ENCODE measurements at regions of chr17 and their contacts with region 1.

Region 1: DNA sequence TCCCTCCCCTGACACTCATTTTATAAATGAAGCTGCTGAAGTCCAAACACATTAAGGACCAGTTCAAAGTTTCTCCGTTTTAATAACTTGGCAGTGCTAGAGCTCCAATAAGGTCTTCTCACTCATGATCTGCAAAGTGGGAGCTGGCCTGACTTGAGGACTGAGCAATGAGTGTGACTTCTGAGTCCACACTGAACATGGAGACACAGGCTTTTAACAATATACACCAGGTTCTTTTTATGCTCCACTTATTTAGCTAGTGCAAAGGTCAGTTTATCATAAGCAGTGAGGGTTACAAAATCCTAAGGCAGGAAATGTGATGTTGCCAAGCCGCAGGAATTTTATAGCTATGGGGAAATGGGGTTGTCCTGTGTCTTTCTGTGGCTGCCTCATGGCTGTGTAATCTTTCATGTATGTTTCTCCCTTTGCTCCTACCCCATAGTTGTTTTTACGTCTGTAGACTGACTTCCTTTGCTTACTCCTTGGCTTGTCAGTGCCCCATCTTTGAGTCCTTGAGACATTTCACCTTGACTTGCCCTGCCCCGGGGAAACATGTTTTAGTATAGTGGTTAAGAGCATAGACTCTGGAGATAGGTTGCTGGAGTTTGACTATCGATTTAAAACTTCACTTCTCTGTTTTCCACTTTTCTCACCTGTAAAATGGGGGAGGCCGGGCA is 12.1 kb upstream of the MMD start:
- DNase-seq: peak; percentile 80 to 91
- ATAC-seq: peak; percentile 76 to 85
- H3K4me3 ChIP-seq: peak overlapping the region; percentile 6; the same call in 1 of the 3 replicates
- H3K27ac ChIP-seq: peak overlapping the region; percentile 84 to 86
- H3K4me1 ChIP-seq: peaks cover 55% of the 10 kb centered on the region
- CTCF ChIP-seq: no peak
- EP300 ChIP-seq: peak; percentile 79 to 91; a peak in 4 of 5 replicates
- POLR2A ChIP-seq: no peak
- RAD21 ChIP-seq: peak in 1 of 2 experiments; percentile 38; a peak in 2 of 5 replicates

Region 2: GRCh38 chr17:55177159-55177854 is 256.5 kb before region 1 on chr17:
- CTCF ChIA-PET with region 1: no interaction called
- POLR2A ChIA-PET with region 1: no interaction called
- DNase-seq: peak in 1 of 2 experiments; percentile 29
- ATAC-seq: peak in 1 of 2 experiments; percentile 67; a peak in 3 of 6 replicates
- H3K4me3 ChIP-seq: no peak overlapping the region
- H3K27ac ChIP-seq: no peak overlapping the region
- H3K4me1 ChIP-seq: no peaks in the 10 kb centered on the region
- CTCF ChIP-seq: peak; percentile 13; the same call in 1 of the 3 replicates
- EP300 ChIP-seq: no peak
- POLR2A ChIP-seq: no peak
- RAD21 ChIP-seq: no peak; a peak in 1 of 5 replicates

Region 3: GRCh38 chr17:55264645-55265298 is 169.0 kb before region 1 on chr17 and contains the start of gene HLF:
- CTCF ChIA-PET with region 1: no interaction called
- POLR2A ChIA-PET with region 1: no interaction called
- DNase-seq: peak; percentile 77 to 86
- ATAC-seq: peak; percentile 88 to 91
- H3K4me3 ChIP-seq: peak within 1 kb of the TSS; percentile 58
- H3K27ac ChIP-seq: peak within 1 kb of the TSS; percentile 53 to 75; a peak in 5 of 6 replicates
- H3K4me1 ChIP-seq: peaks cover 12% of the 10 kb centered on the region; the same call in 1 of the 3 replicates
- CTCF ChIP-seq: no peak
- EP300 ChIP-seq: no peak
- POLR2A ChIP-seq: no peak
- RAD21 ChIP-seq: no peak; a peak in 1 of 5 replicates
- polyA plus RNA-seq, gene HLF: 1.0 and 1.4 TPM in 2 replicates

Region 4: DNA sequence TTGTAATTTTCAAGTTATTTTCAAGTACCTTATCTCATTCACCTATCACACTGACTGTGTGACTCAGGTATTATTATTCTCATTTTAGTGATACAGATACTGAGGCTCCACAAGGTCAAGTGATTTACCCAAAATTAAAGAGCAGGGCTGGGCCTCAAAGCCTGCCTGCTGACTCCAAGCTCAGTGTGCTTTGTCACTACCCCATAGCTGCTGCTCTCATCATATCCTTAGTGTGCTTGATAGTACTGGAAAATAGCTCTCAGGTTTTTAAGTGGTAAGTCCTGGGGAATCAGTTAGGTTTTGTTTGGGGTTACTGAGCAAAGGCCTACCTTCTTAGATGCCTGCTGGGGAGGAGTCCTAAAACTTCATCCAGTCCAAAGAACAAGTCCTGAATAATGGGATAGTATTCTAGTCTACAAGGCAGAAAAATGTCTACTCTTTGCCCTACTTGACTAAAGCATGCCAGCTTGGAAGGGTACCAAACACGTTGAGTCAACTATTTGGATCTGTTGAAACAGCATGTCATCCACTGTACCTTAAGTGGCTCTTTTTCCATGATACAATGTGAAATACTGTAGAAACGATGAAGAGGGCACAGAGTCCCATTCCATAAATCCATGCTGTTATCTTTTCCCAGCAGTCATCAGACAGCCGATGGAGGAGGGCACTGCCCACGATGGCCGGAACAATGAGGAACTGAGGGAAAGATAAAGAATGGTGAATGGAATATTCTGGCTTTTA is 22.9 kb before region 1 on chr17:
- CTCF ChIA-PET with region 1: no interaction called
- POLR2A ChIA-PET with region 1: no interaction called
- DNase-seq: no peak
- ATAC-seq: no peak
- H3K4me3 ChIP-seq: no peak overlapping the region
- H3K27ac ChIP-seq: peak overlapping the region in 1 of 2 experiments; percentile 5; a peak in 2 of 6 replicates
- H3K4me1 ChIP-seq: peaks cover 30% of the 10 kb centered on the region; the same call in 2 of the 3 replicates
- CTCF ChIP-seq: no peak
- EP300 ChIP-seq: no peak
- POLR2A ChIP-seq: no peak
- RAD21 ChIP-seq: no peak

Region 5: DNA sequence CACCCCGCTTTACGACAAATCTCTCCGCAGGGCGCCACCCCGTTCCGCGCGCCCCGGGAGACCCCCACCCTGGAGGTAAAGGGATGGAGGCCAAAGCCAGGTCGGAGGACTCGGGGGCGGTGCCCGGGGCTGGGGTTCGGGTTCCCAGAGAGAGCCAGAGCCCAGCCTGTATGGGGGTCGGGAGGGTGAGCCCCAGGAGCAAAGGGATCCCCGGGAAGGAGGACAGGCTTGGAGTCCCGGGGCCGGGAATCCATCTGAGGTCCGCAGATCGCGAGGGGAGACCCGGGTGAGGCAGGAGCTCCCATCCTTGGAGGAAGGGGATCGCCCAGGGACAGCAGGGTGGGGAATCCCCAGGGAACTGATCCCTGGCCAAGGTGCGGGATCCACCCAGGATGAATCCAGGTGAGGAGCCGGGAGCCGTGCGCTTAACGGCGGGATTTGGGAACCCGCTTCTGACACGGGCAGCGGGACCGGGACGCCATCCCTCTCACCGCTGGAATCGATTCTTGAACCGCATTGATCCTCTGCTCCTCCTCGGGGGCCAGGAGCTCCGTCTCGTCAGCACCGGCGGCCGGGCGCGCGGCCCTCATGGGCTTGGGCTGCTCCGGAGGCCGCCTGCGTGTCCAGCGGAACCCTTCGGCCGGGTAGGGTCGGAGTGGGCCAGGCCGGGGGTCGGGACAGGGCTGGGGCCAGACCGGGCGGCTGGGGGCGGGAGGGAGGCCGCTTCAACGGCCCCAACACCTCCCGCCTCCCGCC is 12.4 kb before region 1 on chr17 and contains the start of gene MMD:
- CTCF ChIA-PET with region 1: interaction called, 7 read pairs
- POLR2A ChIA-PET with region 1: interaction called, 23 read pairs
- DNase-seq: peak in 1 of 2 experiments; percentile 81
- ATAC-seq: peak; percentile 70 to 77
- H3K4me3 ChIP-seq: peak within 1 kb of the TSS; percentile 73
- H3K27ac ChIP-seq: peak within 1 kb of the TSS; percentile 86 to 92
- H3K4me1 ChIP-seq: peaks cover 23% of the 10 kb centered on the region
- CTCF ChIP-seq: no peak
- EP300 ChIP-seq: no peak
- POLR2A ChIP-seq: peak; percentile 24; the same call in 1 of the 2 replicates
- RAD21 ChIP-seq: no peak; a peak in 2 of 5 replicates
- polyA plus RNA-seq, gene MMD: 50.9 and 54.7 TPM in 2 replicates

Region 6: GRCh38 chr17:55452139-55452790 is 18.5 kb after region 1 on chr17:
- CTCF ChIA-PET with region 1: interaction called, 9 read pairs
- POLR2A ChIA-PET with region 1: interaction called, 48 read pairs
- DNase-seq: peak; percentile 50 to 94
- ATAC-seq: peak; percentile 64 to 65
- H3K4me3 ChIP-seq: no peak overlapping the region
- H3K27ac ChIP-seq: peak overlapping the region; percentile 83 to 88
- H3K4me1 ChIP-seq: peaks cover 81% of the 10 kb centered on the region
- CTCF ChIP-seq: no peak
- EP300 ChIP-seq: no peak; a peak in 1 of 5 replicates
- POLR2A ChIP-seq: no peak
- RAD21 ChIP-seq: peak; percentile 20 to 37; a peak in 4 of 5 replicates

Region 7: DNA sequence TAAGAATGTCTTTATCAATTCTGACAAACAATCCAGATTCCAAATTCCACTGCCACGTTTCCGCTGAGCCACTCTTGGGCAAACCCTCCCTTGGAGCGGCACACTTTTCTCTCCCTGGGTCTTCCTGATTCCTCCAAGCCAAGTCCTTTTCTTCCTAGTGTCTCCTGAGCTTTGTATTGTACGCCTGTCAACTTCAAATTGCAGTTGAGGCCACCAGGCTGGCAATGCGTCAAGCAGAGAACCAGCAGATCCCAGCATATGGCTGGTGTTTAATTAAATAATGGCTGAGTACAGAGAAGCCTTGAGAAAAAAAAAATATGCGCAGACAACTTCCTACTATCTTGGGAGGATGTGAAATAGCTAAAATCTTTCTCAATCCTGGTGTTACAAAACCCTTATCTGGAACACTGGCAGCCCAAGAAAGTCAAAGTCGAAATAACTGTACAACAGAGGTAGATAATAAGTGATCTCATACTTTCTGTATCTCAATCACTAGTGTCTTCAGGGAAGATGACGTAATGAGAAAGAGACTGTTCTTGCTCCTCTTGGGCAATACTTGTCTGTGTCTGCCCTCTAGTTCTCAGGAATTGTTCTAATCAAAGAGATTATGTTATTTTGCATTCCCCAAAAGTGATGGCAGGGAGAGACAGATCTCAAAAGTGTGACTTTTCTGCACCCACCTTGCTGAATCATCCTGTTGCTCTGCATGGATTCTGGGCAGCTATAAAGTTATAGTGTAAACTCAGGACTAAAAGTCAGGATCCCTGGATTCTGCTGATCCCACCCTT is 62.5 kb after region 1 on chr17:
- CTCF ChIA-PET with region 1: interaction called, 3 read pairs
- POLR2A ChIA-PET with region 1: interaction called, 11 read pairs
- DNase-seq: peak; percentile 67 to 93
- ATAC-seq: peak; percentile 81 to 93
- H3K4me3 ChIP-seq: peak overlapping the region; percentile 4; the same call in 1 of the 3 replicates
- H3K27ac ChIP-seq: peak overlapping the region; percentile 85 to 89
- H3K4me1 ChIP-seq: peaks cover 51% of the 10 kb centered on the region
- CTCF ChIP-seq: peak; percentile 22; the same call in 1 of the 3 replicates
- EP300 ChIP-seq: peak; percentile 95 to 96; a peak in 4 of 5 replicates
- POLR2A ChIP-seq: no peak
- RAD21 ChIP-seq: peak; percentile 25 to 80; a peak in 4 of 5 replicates

Measured in A549 (cell line).